Caco-2 (cell line): ENCODE measurements at regions of chr9 and their contacts with region 1.

Region 1: GRCh38 chr9:95031711-95032461 is 285.6 kb downstream of the FANCC start:
- DNase-seq: peak; percentile 77
- H3K4me3 ChIP-seq: no peak overlapping the region
- H3K4me3 Mint-ChIP-seq: peak overlapping the region; percentile 14
- H3K27ac Mint-ChIP-seq: peak overlapping the region; percentile 69
- H3K4me1 ChIP-seq: peaks cover 40% of the 10 kb centered on the region
- H3K4me1 Mint-ChIP-seq: peaks cover 33% of the 10 kb centered on the region
- H3K27me3 ChIP-seq: no peaks in the 10 kb centered on the region
- H3K27me3 Mint-ChIP-seq: no peaks in the 10 kb centered on the region
- CTCF ChIP-seq: no peak

Region 2: GRCh38 chr9:95004411-95005277 is 27.2 kb before region 1 on chr9:
- CTCF ChIA-PET with region 1: no interaction called
- POLR2A ChIA-PET with region 1: no interaction called
- intact Hi-C with region 1: loop called (anchors 2 kb)
- DNase-seq: peak; percentile 73 to 78
- H3K4me3 ChIP-seq: peak overlapping the region; percentile 86
- H3K4me3 Mint-ChIP-seq: peak overlapping the region; percentile 81
- H3K27ac Mint-ChIP-seq: no peak overlapping the region
- H3K4me1 ChIP-seq: peaks cover 40% of the 10 kb centered on the region
- H3K4me1 Mint-ChIP-seq: peaks cover 38% of the 10 kb centered on the region
- H3K27me3 ChIP-seq: no peaks in the 10 kb centered on the region
- H3K27me3 Mint-ChIP-seq: no peaks in the 10 kb centered on the region
- CTCF ChIP-seq: no peak

Region 3: GRCh38 chr9:95048225-95049087 is 16.6 kb after region 1 on chr9:
- CTCF ChIA-PET with region 1: no interaction called
- POLR2A ChIA-PET with region 1: interaction called, 3 read pairs
- intact Hi-C with region 1: loop called (anchors 2 kb)
- DNase-seq: peak; percentile 76 to 82
- H3K4me3 ChIP-seq: peak overlapping the region; percentile 62
- H3K4me3 Mint-ChIP-seq: peak overlapping the region; percentile 91
- H3K27ac Mint-ChIP-seq: peak overlapping the region; percentile 82
- H3K4me1 ChIP-seq: peaks cover 19% of the 10 kb centered on the region
- H3K4me1 Mint-ChIP-seq: peaks cover 22% of the 10 kb centered on the region
- H3K27me3 ChIP-seq: no peaks in the 10 kb centered on the region
- H3K27me3 Mint-ChIP-seq: no peaks in the 10 kb centered on the region
- CTCF ChIP-seq: no peak

Region 4: GRCh38 chr9:95055851-95056551 is 24.1 kb after region 1 on chr9:
- CTCF ChIA-PET with region 1: interaction called, 6 read pairs
- POLR2A ChIA-PET with region 1: interaction called, 7 read pairs
- intact Hi-C with region 1: loop called (anchors 1 kb)
- DNase-seq: no peak
- H3K4me3 ChIP-seq: no peak overlapping the region
- H3K4me3 Mint-ChIP-seq: no peak overlapping the region
- H3K27ac Mint-ChIP-seq: peak overlapping the region; percentile 90
- H3K4me1 ChIP-seq: peaks cover 28% of the 10 kb centered on the region
- H3K4me1 Mint-ChIP-seq: peaks cover 44% of the 10 kb centered on the region
- H3K27me3 ChIP-seq: no peaks in the 10 kb centered on the region
- H3K27me3 Mint-ChIP-seq: no peaks in the 10 kb centered on the region
- CTCF ChIP-seq: no peak

Region 5: GRCh38 chr9:95065224-95065623 is 33.3 kb after region 1 on chr9:
- CTCF ChIA-PET with region 1: interaction called, 3 read pairs
- POLR2A ChIA-PET with region 1: no interaction called
- intact Hi-C with region 1: loop called (anchors 2 kb)
- DNase-seq: no peak
- H3K4me3 ChIP-seq: no peak overlapping the region
- H3K4me3 Mint-ChIP-seq: peak overlapping the region; percentile 25
- H3K27ac Mint-ChIP-seq: peak overlapping the region; percentile 95
- H3K4me1 ChIP-seq: peaks cover 26% of the 10 kb centered on the region
- H3K4me1 Mint-ChIP-seq: peaks cover 37% of the 10 kb centered on the region
- H3K27me3 ChIP-seq: no peaks in the 10 kb centered on the region
- H3K27me3 Mint-ChIP-seq: no peaks in the 10 kb centered on the region
- CTCF ChIP-seq: no peak

Region 6: DNA sequence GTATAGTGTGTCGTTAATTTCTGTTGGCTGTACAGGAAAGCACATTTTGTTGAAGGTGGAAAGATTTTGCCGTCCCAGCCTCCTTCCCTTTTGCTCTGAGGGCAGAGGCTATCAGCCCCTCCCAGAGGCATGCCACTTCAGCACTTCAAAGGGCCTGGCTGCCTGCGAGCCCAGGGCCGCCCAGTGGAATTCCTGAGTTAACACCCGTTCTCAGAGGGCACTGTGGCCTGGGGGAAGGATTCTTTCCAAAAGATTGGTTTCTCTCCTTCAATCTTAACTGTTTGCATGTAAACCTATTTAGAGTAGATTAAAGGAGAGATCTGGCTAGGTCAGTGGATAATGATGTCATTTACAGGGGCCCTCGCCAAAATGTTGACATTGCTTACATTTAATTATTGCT is 47.1 kb after region 1 on chr9:
- CTCF ChIA-PET with region 1: no interaction called
- POLR2A ChIA-PET with region 1: no interaction called
- intact Hi-C with region 1: loop called (anchors 2 kb)
- DNase-seq: peak; percentile 75 to 79
- H3K4me3 ChIP-seq: no peak overlapping the region
- H3K4me3 Mint-ChIP-seq: peak overlapping the region; percentile 14
- H3K27ac Mint-ChIP-seq: peak overlapping the region; percentile 53
- H3K4me1 ChIP-seq: peaks cover 39% of the 10 kb centered on the region
- H3K4me1 Mint-ChIP-seq: peaks cover 43% of the 10 kb centered on the region
- H3K27me3 ChIP-seq: no peaks in the 10 kb centered on the region
- H3K27me3 Mint-ChIP-seq: no peaks in the 10 kb centered on the region
- CTCF ChIP-seq: no peak